ENCODE measurements at regions of chr14 and their contacts with region 1.

Region 1: DNA sequence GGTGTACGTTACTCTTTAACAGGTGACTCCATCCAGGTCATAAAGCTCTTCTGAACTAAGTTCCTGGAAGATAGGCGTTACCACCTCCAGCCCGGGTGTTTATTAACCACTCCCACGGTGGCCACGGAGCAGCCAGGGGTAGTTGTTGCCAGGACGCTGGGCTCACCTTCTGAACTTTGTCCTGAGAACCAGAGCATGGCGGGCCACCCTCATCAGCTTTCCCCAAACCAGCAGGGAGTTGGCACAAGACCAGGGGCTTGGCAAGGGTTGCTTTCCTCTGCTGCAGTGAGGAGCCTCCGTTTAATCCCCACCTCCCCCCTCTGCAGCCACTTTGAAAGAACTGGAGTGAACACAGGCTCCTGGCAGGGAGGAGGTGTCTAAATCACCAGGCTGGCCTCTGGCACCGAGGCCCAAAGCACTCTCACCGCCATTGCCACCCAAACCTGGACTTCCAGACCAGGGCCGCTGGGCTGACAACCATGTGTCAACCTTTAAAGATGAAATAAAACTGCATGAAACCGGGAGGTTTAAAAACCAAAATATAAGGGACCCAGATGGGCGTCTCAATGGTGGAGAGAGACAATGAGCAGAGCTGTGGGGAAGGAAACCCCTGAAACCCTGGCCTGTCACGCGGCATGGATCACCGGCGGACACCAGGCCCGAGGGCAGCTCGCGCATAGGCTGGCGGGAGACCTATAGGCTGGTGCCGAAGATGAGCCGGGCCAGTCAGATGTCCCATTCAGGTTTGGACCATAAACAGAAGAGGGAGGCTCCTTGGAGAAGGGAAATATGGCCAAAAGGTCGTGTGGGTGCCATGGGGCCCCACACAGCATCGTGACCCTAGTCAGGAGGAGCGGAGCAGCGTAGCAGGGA is 30.9 kb upstream of the TDRD9 start:
- DNase-seq: no peak
- ATAC-seq: no peak
- H3K4me3 Mint-ChIP-seq: no peak overlapping the region
- H3K27ac Mint-ChIP-seq: no peak overlapping the region
- H3K4me1 Mint-ChIP-seq: peaks cover 3% of the 10 kb centered on the region
- H3K27me3 Mint-ChIP-seq: no peaks in the 10 kb centered on the region

Region 2: DNA sequence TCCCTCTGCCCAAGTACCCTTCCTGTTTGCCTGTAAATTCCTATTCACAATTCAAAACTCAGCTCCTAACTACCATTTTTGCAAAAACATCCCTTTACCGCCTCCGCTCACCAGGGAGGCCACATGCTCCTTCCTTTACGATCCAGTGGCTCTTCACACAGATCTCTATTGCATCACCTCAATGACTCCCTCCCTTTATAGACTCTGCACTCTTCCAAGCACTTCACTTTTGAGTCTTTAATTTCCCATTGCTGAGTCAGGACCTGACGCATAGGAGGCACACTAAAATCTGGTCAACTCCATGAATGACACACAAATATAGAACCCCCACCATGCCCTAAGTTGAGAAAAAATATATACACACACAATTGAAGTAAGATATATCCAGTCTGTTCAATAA is 95.9 kb before region 1 on chr14:
- CTCF ChIA-PET with region 1: interaction called, 18 read pairs
- POLR2A ChIA-PET with region 1: no interaction called
- DNase-seq: no peak
- ATAC-seq: no peak
- H3K4me3 Mint-ChIP-seq: no peak overlapping the region
- H3K27ac Mint-ChIP-seq: no peak overlapping the region
- H3K4me1 Mint-ChIP-seq: no peaks in the 10 kb centered on the region
- H3K27me3 Mint-ChIP-seq: no peaks in the 10 kb centered on the region

Region 3: GRCh38 chr14:103808403-103809001 is 88.8 kb before region 1 on chr14:
- CTCF ChIA-PET with region 1: interaction called, 22 read pairs
- POLR2A ChIA-PET with region 1: no interaction called
- DNase-seq: peak; percentile 77
- ATAC-seq: peak; percentile 81
- H3K4me3 Mint-ChIP-seq: no peak overlapping the region
- H3K27ac Mint-ChIP-seq: no peak overlapping the region
- H3K4me1 Mint-ChIP-seq: no peaks in the 10 kb centered on the region
- H3K27me3 Mint-ChIP-seq: no peaks in the 10 kb centered on the region

Region 4: DNA sequence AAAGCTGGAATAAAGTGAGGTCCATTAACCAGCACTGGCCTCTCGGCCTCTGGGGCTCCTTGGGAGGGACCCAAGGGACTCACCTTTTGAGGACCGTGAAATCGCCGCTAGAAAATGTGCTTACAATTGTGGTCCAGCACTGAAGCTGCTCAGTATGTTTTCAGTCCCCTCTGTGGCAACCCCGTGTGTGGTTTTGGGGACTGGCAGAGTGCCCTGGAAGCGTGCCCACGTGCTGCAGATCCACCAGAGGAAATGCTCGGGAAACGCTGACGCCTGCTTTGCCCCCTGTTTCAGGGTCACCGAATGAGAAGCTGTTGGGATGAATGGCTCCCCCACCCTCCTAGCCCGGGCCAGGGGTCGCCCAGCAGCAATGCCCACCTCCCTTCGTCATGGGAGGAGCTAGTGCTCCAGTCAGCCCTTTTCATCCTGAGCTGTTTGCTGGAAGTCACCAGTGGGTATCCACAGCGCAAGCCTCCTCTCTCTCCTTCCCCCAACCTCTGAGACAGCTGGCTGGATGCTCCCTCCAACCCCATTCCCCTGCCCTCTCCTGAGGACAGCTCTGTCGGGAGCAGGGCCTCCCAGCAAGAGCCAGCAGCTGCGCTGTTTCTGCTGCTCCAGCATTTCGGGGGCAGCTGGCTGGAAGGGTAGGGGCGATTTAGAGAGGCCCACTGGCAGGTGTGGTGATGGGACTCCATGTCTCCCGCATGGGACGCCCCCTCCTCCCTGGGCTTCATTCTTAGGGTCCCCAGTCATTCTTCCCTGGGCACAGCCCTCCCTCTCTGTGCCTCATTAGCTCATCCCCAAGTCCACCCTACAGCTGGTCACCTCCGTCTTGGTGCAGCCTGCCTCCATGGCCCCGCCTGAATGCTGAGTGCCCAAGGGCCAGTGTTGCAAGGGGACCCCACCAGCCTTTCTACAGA is 16.7 kb before region 1 on chr14:
- CTCF ChIA-PET with region 1: interaction called, 36 read pairs
- POLR2A ChIA-PET with region 1: interaction called, 3 read pairs
- DNase-seq: no peak
- ATAC-seq: no peak
- H3K4me3 Mint-ChIP-seq: peak overlapping the region; percentile 25
- H3K27ac Mint-ChIP-seq: no peak overlapping the region
- H3K4me1 Mint-ChIP-seq: peaks cover 15% of the 10 kb centered on the region
- H3K27me3 Mint-ChIP-seq: no peaks in the 10 kb centered on the region

Region 5: DNA sequence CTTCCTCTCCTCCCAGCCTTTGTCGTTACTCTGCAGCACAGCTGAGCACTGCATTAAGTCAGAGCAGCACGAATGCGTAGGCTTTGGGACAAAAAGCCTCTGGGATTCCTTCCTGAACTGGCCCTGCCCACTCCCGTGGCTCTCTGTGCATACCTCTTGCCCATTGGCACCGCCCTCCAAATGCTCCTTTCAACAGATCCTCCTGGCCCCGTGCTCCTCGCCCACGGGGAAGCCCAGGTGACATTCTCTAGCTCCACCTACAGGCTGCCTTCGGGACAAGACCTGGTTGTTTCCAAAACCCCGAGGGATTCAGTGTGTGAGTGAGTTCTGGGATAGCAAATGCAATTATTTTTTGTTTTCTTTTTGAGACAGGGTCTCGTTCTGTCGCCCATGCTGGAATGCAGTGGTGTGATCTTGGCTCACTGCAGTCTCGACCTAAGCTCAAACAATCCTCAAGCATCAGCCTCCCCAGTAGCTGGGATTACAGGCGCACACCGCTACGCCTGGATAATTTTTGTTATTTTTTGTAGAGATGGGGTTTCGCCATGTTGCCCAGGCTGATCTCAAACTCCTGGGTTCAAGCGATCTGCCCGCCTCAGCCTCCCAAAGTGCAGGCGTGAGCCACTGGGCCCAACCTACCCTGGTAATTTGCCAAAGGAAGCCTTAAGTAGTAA is 13.1 kb after region 1 on chr14:
- CTCF ChIA-PET with region 1: interaction called, 50 read pairs
- POLR2A ChIA-PET with region 1: no interaction called
- DNase-seq: peak; percentile 80
- ATAC-seq: peak; percentile 95
- H3K4me3 Mint-ChIP-seq: peak overlapping the region; percentile 32
- H3K27ac Mint-ChIP-seq: peak overlapping the region; percentile 62
- H3K4me1 Mint-ChIP-seq: peaks cover 27% of the 10 kb centered on the region
- H3K27me3 Mint-ChIP-seq: no peaks in the 10 kb centered on the region

Region 6: GRCh38 chr14:103920981-103921854 is 23.9 kb after region 1 on chr14:
- CTCF ChIA-PET with region 1: interaction called, 29 read pairs
- POLR2A ChIA-PET with region 1: no interaction called
- DNase-seq: peak; percentile 94
- ATAC-seq: peak; percentile 99
- H3K4me3 Mint-ChIP-seq: peak overlapping the region; percentile 91
- H3K27ac Mint-ChIP-seq: peak overlapping the region; percentile 86
- H3K4me1 Mint-ChIP-seq: peaks cover 8% of the 10 kb centered on the region
- H3K27me3 Mint-ChIP-seq: peaks cover 12% of the 10 kb centered on the region

Region 7: DNA sequence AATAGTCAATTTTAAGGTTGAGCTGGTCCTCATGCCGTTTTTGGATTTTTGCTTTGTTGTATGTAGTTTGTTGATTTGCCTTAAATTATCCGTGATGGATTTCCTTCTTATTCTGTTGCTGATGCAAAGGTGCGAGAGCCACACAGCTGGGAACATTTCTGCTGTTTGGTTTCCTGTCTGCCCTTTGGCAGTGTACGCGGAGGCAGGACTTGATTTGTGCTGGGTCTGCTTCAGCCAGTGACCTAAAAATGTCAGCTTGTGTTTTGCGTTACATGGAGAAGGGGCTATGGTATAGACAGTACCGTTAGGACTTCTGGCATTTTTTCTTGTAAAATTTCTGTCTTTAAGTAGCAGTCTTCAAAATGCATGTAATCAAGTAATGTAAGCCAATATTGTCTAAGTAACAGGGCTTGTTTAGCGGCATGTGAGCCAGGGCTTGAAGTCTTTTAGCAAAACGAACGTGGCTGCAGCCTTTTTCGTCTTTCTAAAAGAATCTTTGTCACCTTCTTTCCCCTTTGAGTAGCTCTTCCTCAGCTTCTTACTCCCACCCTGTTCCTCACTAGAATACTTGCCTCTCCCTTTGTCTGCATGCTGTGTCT is 63.2 kb after region 1 on chr14:
- CTCF ChIA-PET with region 1: no interaction called
- POLR2A ChIA-PET with region 1: no interaction called
- DNase-seq: no peak
- ATAC-seq: no peak
- H3K4me3 Mint-ChIP-seq: no peak overlapping the region
- H3K27ac Mint-ChIP-seq: no peak overlapping the region
- H3K4me1 Mint-ChIP-seq: no peaks in the 10 kb centered on the region
- H3K27me3 Mint-ChIP-seq: peaks cover 7% of the 10 kb centered on the region